ENCODE measurements at regions of chr17 and their contacts with region 1.

Region 1: GRCh38 chr17:82909322-82909904 is 69.6 kb upstream of the ZNF750 start:
- DNase-seq: peak; percentile 97 to 99 (median 98)
- ATAC-seq: peak; percentile 93
- H3K4me3 ChIP-seq: no peak overlapping the region
- H3K27ac ChIP-seq: peak overlapping the region; percentile 85 to 92 (median 88)
- H3K4me1 ChIP-seq: peaks cover 19% of the 10 kb centered on the region
- H3K27me3 ChIP-seq: no peaks in the 10 kb centered on the region
- CTCF ChIP-seq: no peak
- POLR2A ChIP-seq: peak; percentile 63 to 88 (median 87)

Region 2: DNA sequence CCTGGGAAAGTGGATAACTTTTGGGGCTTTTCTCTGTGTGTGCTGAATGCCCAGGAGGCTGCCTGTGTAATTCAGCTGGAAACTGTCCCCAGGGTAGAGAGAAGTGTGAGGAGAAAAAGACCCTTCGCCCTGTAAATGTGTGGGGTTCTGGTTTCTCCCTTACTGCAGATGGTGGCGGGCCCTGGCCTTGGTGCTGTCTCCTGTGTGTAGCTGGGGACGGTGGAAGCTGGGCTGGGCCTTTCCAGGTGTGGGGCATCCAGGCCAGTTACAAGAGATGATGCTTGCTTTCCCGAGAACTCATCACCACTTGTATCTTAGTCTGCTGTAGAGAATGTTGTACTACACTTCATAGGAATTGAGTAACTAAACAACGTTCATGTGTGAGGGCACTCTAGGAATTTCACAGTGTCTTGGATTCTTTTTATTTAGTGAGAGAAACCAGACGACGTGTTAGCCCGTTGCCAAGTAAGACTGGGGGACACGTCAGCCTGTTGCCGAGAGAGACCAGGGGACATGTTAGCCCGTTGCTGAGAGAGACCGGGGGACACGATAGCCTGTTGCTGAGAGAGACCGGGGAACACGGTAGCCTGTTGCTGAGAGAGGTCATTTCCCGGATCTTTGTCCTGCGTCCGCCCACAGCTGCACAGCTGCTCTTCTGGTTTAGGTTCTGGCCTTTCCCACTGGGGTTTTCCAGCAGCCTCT is 114.5 kb before region 1 on chr17:
- intact Hi-C with region 1: no loop called
- DNase-seq: peak in 2 of 4 donors; percentile 20 to 49
- ATAC-seq: peak; percentile 56
- H3K4me3 ChIP-seq: no peak overlapping the region
- H3K27ac ChIP-seq: peak overlapping the region in 1 of 4 donors; percentile 14
- H3K4me1 ChIP-seq: no peaks in the 10 kb centered on the region
- H3K27me3 ChIP-seq: no peaks in the 10 kb centered on the region
- CTCF ChIP-seq: no peak
- POLR2A ChIP-seq: no peak

Region 3: DNA sequence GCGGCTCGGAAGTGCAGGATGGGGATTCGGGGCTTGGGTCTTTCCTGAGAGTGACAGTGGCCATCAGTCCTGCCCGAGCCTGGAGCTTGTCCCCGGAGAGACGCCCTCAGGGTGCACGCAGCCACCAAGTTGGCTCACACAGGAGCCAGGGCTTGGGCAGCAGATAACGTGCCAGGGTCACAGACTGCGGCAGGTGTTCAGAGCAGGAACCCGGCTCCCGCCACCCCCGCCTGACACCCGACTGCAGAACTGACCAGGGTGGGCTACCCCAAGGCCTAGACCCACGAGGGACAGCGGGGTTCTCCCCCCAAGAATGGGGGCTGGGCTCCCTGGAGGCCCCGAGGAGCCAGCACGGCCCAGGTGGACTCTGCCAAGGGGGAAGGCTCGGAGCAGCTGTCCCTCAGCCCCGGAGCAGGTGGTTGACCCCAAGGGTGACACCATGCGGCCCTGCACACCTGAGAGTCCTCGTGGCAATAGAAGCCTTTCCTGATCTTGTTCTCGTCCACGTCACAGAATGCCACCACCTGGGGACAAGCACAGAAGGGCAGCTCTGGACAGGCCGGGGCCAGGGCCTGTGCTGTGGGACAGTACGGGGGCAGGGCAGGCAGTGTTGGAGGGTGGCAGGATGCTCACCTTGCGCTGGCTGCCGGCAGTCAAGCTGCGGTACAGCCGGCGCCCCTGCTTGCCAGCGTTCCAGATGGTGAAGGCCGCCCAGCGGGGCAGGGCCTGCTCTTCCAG is 47.5 kb after region 1 on chr17:
- intact Hi-C with region 1: loop called (anchors 5 kb)
- DNase-seq: peak in 2 of 4 donors; percentile 7 to 39
- ATAC-seq: peak; percentile 45
- H3K4me3 ChIP-seq: no peak overlapping the region
- H3K27ac ChIP-seq: no peak overlapping the region
- H3K4me1 ChIP-seq: no peaks in the 10 kb centered on the region
- H3K27me3 ChIP-seq: no peaks in the 10 kb centered on the region
- CTCF ChIP-seq: no peak
- POLR2A ChIP-seq: no peak

Measured in body of pancreas (tissue), 4 donors.